ENCODE measurements at regions of chr9 and their contacts with region 1.

Region 1: GRCh38 chr9:33816327-33817252 is at the start of gene UBE2R2:
- DNase-seq: peak; percentile 94
- H3K4me3 Mint-ChIP-seq: peak within 1 kb of the TSS; percentile 93
- H3K27ac Mint-ChIP-seq: peak within 1 kb of the TSS; percentile 96
- H3K4me1 Mint-ChIP-seq: peaks cover 51% of the 10 kb centered on the region
- H3K27me3 Mint-ChIP-seq: no peaks in the 10 kb centered on the region
- total RNA-seq, gene UBE2R2: 44.2 to 46.9 TPM

Region 2: DNA sequence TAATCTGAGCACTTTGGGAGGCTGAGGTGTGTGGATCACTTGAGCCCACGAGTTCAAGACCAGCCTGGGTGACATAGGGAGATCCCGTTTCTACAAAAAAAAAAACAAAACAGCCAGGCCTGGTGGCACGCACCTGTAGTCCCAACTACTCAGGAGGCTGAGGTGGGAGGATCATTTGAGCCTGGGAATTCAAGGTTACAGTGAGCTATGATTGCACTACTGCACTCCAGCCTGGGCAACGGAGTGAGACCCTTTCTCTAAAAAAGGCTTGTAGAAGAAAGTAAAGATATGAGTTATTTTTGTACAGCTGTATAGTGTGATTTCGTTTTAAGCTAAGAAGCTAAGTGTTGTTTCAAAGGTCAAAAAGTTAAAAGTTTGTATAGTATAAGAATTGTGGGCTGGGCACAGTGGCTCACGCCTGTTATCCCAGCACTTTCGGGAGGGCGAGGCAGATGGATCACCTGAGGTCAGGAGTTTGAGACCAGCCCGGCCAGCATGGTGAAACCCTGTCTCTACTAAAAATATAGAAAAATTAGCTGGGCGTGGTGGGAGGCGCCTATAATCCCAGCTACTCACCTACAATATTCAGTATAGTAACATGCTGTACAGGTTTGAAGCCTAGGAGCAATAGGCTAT is 19.2 kb after region 1 on chr9:
- CTCF ChIA-PET with region 1: interaction called, 18 read pairs
- intact Hi-C with region 1: loop called (anchors 1 kb)
- DNase-seq: no peak
- H3K4me3 Mint-ChIP-seq: peak overlapping the region; percentile 8
- H3K27ac Mint-ChIP-seq: peak overlapping the region; percentile 51
- H3K4me1 Mint-ChIP-seq: peaks cover 46% of the 10 kb centered on the region
- H3K27me3 Mint-ChIP-seq: no peaks in the 10 kb centered on the region

Region 3: GRCh38 chr9:33924978-33925797 is 108.6 kb after region 1 on chr9:
- CTCF ChIA-PET with region 1: interaction called, 19 read pairs
- intact Hi-C with region 1: loop called (anchors 1 kb)
- DNase-seq: peak; percentile 48
- H3K4me3 Mint-ChIP-seq: no peak overlapping the region
- H3K27ac Mint-ChIP-seq: no peak overlapping the region
- H3K4me1 Mint-ChIP-seq: no peaks in the 10 kb centered on the region
- H3K27me3 Mint-ChIP-seq: no peaks in the 10 kb centered on the region

Region 4: GRCh38 chr9:34072868-34073590 is 256.4 kb after region 1 on chr9:
- CTCF ChIA-PET with region 1: interaction called, 31 read pairs
- intact Hi-C with region 1: loop called (anchors 1 kb)
- DNase-seq: no peak
- H3K4me3 Mint-ChIP-seq: no peak overlapping the region
- H3K27ac Mint-ChIP-seq: no peak overlapping the region
- H3K4me1 Mint-ChIP-seq: no peaks in the 10 kb centered on the region
- H3K27me3 Mint-ChIP-seq: no peaks in the 10 kb centered on the region

Region 5: GRCh38 chr9:34328987-34329832 is 512.6 kb after region 1 on chr9 and contains the starts of genes KIF24 and NUDT2:
- CTCF ChIA-PET with region 1: no interaction called
- intact Hi-C with region 1: loop called (anchors 1 kb)
- DNase-seq: peak; percentile 98
- H3K4me3 Mint-ChIP-seq: peak within 1 kb of the TSS; percentile 88
- H3K27ac Mint-ChIP-seq: peak within 1 kb of the TSS; percentile 94
- H3K4me1 Mint-ChIP-seq: peaks cover 42% of the 10 kb centered on the region
- H3K27me3 Mint-ChIP-seq: no peaks in the 10 kb centered on the region
- total RNA-seq, gene KIF24: 4.2 to 4.5 TPM
- total RNA-seq, gene NUDT2: 39.2 to 42.9 TPM

Measured in activated naive CD4-positive, alpha-beta T cell treated with anti-CD3 and anti-CD28 coated beads for 36 hours (primary cell).